HCT116 (cell line): ENCODE measurements at regions of chr11 and their contacts with region 1.

Region 1: GRCh38 chr11:45964911-45965389 is 42.5 kb downstream of the LARGE2 start:
- DNase-seq: peak; percentile 49
- ATAC-seq: peak; percentile 96
- H3K4me3 ChIP-seq: no peak overlapping the region
- H3K27ac ChIP-seq: no peak overlapping the region
- H3K4me1 ChIP-seq: no peaks in the 10 kb centered on the region
- H3K27me3 ChIP-seq: no peaks in the 10 kb centered on the region
- CTCF ChIP-seq: peak; percentile 74 to 94 (median 91)
- POLR2A ChIP-seq: no peak
- RAD21 ChIP-seq: peak; percentile 77

Region 2: GRCh38 chr11:45982656-45983470 is 17.9 kb after region 1 on chr11:
- CTCF ChIA-PET with region 1: interaction called, 11 read pairs
- POLR2A ChIA-PET with region 1: no interaction called
- RAD21 ChIA-PET with region 1: no interaction called
- intact Hi-C with region 1: no loop called
- DNase-seq: peak; percentile 13
- ATAC-seq: peak; percentile 90
- H3K4me3 ChIP-seq: 0 out of 4 replicates have a peak overlapping the region, but pooled peaks of 1 of the 2 experiments have one; percentile 3
- H3K27ac ChIP-seq: no peak overlapping the region
- H3K4me1 ChIP-seq: peaks cover 12 to 14% of the 10 kb centered on the region in 2 experiments; a peak in 3 of 4 replicates
- H3K27me3 ChIP-seq: no peaks in the 10 kb centered on the region
- CTCF ChIP-seq: no peak
- POLR2A ChIP-seq: no peak
- RAD21 ChIP-seq: no peak

Region 3: GRCh38 chr11:46134540-46134939 is 169.6 kb after region 1 on chr11:
- CTCF ChIA-PET with region 1: no interaction called
- POLR2A ChIA-PET with region 1: no interaction called
- RAD21 ChIA-PET with region 1: no interaction called
- intact Hi-C with region 1: no loop called
- DNase-seq: no peak
- ATAC-seq: peak; percentile 59; the same call in 1 of the 2 replicates
- H3K4me3 ChIP-seq: no peak overlapping the region
- H3K27ac ChIP-seq: no peak overlapping the region
- H3K4me1 ChIP-seq: no peaks in the 10 kb centered on the region
- H3K27me3 ChIP-seq: no peaks in the 10 kb centered on the region
- CTCF ChIP-seq: no peak
- POLR2A ChIP-seq: no peak
- RAD21 ChIP-seq: peak; percentile 16; the same call in 1 of the 2 replicates